ENCODE measurements at regions of chr18 and their contacts with region 1.

Region 1: DNA sequence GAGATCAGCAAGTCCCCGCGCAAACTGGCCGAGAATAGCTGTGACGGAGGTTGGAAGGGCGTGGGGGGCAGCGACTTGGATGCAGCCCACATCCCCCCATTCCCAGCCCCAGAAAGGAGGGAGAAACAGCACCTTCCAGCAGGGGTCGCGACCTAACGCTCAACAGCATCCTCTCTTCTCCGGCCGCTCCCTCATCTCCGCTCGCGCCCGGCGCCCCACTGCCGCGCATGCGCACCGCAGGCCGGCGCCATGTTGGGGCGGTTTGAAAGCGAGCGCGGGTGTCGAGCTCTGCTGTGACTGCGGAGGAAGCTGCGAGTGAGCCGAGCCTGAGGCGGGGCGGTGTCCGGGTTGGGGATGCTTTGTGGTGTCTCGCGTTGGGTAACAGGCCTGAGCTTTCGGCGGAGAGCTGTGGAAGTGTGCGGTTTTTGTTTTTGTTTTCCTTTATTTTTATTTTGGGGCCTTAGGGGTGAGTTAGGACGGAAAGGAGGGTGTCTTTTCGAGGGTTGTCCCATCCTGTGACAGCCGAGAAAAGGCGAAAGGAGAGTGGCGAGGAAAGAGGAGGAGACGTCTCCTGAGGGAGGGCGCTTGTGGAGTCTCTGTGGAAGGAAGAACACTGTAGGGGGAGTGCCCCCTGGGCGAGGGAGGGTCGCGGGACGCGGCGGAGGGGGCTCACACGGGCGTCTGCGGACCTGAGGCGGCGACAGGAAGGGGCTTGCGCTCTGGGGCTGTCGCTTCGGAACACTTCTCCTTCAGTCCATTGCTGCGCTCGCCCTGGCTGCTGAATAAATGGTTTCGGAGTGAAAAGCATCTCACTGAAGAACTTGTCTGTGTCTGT is at the starts of genes C18orf54 and STARD6:
- DNase-seq: peak; percentile 82 to 93 (median 91)
- ATAC-seq: peak; percentile 96
- H3K4me3 ChIP-seq: peak within 1 kb of the TSS; percentile 88
- H3K4me3 Mint-ChIP-seq: peak within 1 kb of the TSS; percentile 93 to 99 (median 97)
- H3K27ac ChIP-seq: peak within 1 kb of the TSS; percentile 60
- H3K27ac Mint-ChIP-seq: peak within 1 kb of the TSS; percentile 74 to 99 (median 91)
- H3K4me1 ChIP-seq: peaks cover 4 to 7% of the 10 kb centered on the region in 2 donors
- H3K4me1 Mint-ChIP-seq: peaks cover 6 to 32% (median 21%) of the 10 kb centered on the region in 7 donors
- H3K27me3 ChIP-seq: no peaks in the 10 kb centered on the region
- H3K27me3 Mint-ChIP-seq: peaks cover 0 to 12% (median 5%) of the 10 kb centered on the region in 5 donors
- total RNA-seq, gene C18orf54: 0.77 to 8.3 (median 3.6) TPM
- total RNA-seq, gene STARD6: not detected

Region 2: GRCh38 chr18:54181856-54182602 is 175.8 kb before region 1 on chr18:
- CTCF ChIA-PET with region 1: no interaction called
- POLR2A ChIA-PET with region 1: no interaction called
- intact Hi-C with region 1: no loop called
- DNase-seq: no peak
- ATAC-seq: no peak
- H3K4me3 ChIP-seq: no peak overlapping the region
- H3K4me3 Mint-ChIP-seq: no peak overlapping the region
- H3K27ac ChIP-seq: no peak overlapping the region
- H3K27ac Mint-ChIP-seq: no peak overlapping the region
- H3K4me1 ChIP-seq: no peaks in the 10 kb centered on the region
- H3K4me1 Mint-ChIP-seq: peaks cover under 1 to 9% (median 4%) of the 10 kb centered on the region in 7 donors
- H3K27me3 ChIP-seq: no peaks in the 10 kb centered on the region
- H3K27me3 Mint-ChIP-seq: no peaks in the 10 kb centered on the region

Region 3: DNA sequence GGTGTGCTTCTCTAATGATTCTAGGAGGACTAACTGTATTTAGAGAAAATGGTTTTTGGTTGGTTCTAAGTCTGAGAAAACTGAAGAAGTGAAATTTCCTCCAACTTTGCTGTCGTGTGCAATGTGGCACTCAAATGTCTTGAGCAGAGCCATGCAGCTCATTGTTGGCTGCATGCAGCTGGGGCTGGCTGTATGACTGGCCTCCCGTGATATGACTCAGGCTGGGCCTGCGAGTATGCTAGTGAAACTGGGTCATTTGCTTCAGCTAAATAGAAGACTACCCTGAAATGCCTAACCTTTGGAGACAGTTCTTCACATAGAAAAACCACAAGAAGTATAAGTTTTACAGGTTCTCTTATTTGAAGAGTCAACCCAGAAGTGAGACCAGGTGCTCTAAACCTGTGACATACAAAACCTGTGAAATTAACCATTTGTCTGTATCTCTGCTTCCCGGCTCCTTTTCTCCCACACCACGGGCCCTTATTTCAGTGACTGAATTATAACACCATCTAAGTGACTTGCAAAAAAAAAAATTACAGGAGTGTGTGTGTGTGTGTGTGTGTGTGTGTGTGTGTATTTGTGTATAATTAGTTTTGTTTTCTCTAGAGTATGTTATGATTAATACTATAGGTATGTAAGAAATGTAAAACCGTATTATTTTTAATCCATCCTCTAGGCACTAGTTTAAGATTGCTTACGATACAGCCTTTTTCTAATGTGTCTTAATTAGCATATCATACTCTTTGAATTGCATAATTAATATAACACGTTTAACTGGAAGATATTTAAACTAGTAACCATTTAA is 72.7 kb before region 1 on chr18:
- CTCF ChIA-PET with region 1: no interaction called
- POLR2A ChIA-PET with region 1: no interaction called
- intact Hi-C with region 1: loop called in 1 of 2 experiments (anchors 5 kb)
- DNase-seq: peak in 1 of 9 donors; percentile 60
- ATAC-seq: peak; percentile 51
- H3K4me3 ChIP-seq: no peak overlapping the region
- H3K4me3 Mint-ChIP-seq: peak overlapping the region in 1 of 10 donors; percentile 15
- H3K27ac ChIP-seq: no peak overlapping the region
- H3K27ac Mint-ChIP-seq: peak overlapping the region in 3 of 9 donors; percentile 28 to 29 (median 28)
- H3K4me1 ChIP-seq: peaks cover 0 to 5% of the 10 kb centered on the region in 2 donors
- H3K4me1 Mint-ChIP-seq: peaks cover 1 to 31% (median 7%) of the 10 kb centered on the region in 7 donors
- H3K27me3 ChIP-seq: no peaks in the 10 kb centered on the region
- H3K27me3 Mint-ChIP-seq: no peaks in the 10 kb centered on the region

Region 4: DNA sequence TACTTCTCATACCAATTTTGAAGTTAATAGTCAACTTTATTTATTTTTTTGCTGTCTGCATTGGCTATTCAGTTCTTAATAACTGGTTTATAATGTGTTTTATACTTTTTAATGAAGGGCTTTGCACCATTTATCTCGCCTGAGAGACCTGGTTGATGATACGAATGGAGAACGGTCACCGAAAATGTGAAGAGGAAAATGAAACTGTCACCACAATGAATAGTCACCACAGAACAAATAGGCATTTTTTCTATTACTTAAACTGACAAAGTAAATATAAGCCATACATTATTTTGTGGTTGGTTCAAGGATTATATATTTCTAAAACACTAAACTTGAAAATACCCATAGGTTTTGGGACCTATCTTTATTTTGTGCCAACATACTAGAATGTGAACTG is 20.2 kb after region 1 on chr18:
- CTCF ChIA-PET with region 1: interaction called, 3 read pairs
- POLR2A ChIA-PET with region 1: no interaction called
- intact Hi-C with region 1: loop called in 1 of 2 experiments (anchors 2 kb)
- DNase-seq: no peak
- ATAC-seq: no peak
- H3K4me3 ChIP-seq: no peak overlapping the region
- H3K4me3 Mint-ChIP-seq: no peak overlapping the region
- H3K27ac ChIP-seq: no peak overlapping the region
- H3K27ac Mint-ChIP-seq: no peak overlapping the region
- H3K4me1 ChIP-seq: no peaks in the 10 kb centered on the region
- H3K4me1 Mint-ChIP-seq: no peaks in the 10 kb centered on the region
- H3K27me3 ChIP-seq: no peaks in the 10 kb centered on the region
- H3K27me3 Mint-ChIP-seq: no peaks in the 10 kb centered on the region

Region 5: GRCh38 chr18:54392543-54393023 is 34.7 kb after region 1 on chr18:
- CTCF ChIA-PET with region 1: no interaction called
- POLR2A ChIA-PET with region 1: no interaction called
- intact Hi-C with region 1: loop called (anchors 1 to 2 kb)
- DNase-seq: peak in 7 of 9 donors; percentile 5 to 55 (median 39)
- ATAC-seq: peak; percentile 80
- H3K4me3 ChIP-seq: no peak overlapping the region
- H3K4me3 Mint-ChIP-seq: no peak overlapping the region
- H3K27ac ChIP-seq: no peak overlapping the region
- H3K27ac Mint-ChIP-seq: no peak overlapping the region
- H3K4me1 ChIP-seq: no peaks in the 10 kb centered on the region
- H3K4me1 Mint-ChIP-seq: peaks cover 0 to 37% (median 0%) of the 10 kb centered on the region in 7 donors
- H3K27me3 ChIP-seq: no peaks in the 10 kb centered on the region
- H3K27me3 Mint-ChIP-seq: peaks cover 9 to 29% (median 16%) of the 10 kb centered on the region in 5 donors

Region 6: DNA sequence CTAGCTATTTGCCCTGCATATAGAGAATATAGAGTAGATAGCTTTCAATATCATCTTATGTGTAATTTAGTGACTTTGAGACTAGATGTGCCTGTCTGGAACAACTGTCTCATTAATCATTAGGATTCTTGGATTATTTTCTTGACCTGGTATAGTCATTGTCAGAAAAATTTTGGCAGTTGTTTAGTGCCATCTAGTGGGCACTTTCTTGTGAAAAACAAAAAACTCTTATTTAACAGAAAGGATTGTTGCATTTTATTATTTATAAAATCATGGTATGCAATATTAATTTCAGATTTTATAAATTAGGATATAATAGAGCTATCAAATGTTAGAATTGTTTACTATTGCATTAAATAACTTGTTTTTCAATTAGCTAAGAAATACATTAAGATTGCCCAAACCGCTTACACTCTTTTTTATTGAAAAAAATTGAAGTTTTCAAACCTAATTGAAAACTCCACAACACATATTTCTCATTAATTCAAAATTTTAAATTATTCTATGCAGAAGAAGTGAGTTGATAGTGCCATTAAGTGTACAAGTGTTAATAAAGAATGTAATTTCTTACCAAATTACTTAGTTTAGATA is 313.5 kb after region 1 on chr18:
- CTCF ChIA-PET with region 1: no interaction called
- POLR2A ChIA-PET with region 1: no interaction called
- intact Hi-C with region 1: loop called in 1 of 2 experiments (anchors 1 kb)
- DNase-seq: peak in 4 of 9 donors; percentile 16 to 30 (median 20)
- ATAC-seq: no peak
- H3K4me3 ChIP-seq: no peak overlapping the region
- H3K4me3 Mint-ChIP-seq: no peak overlapping the region
- H3K27ac ChIP-seq: no peak overlapping the region
- H3K27ac Mint-ChIP-seq: no peak overlapping the region
- H3K4me1 ChIP-seq: no peaks in the 10 kb centered on the region
- H3K4me1 Mint-ChIP-seq: no peaks in the 10 kb centered on the region
- H3K27me3 ChIP-seq: no peaks in the 10 kb centered on the region
- H3K27me3 Mint-ChIP-seq: peaks cover 0 to 10% (median 9%) of the 10 kb centered on the region in 5 donors

Region 7: GRCh38 chr18:54828281-54828881 is 470.5 kb after region 1 on chr18 and contains the start of gene RAB27B:
- CTCF ChIA-PET with region 1: no interaction called
- POLR2A ChIA-PET with region 1: no interaction called
- intact Hi-C with region 1: loop called in 1 of 2 experiments (anchors 5 kb)
- DNase-seq: peak; percentile 41 to 68 (median 61)
- ATAC-seq: peak; percentile 96
- H3K4me3 ChIP-seq: peak within 1 kb of the TSS; percentile 72
- H3K4me3 Mint-ChIP-seq: peak within 1 kb of the TSS; percentile 87 to 95 (median 92)
- H3K27ac ChIP-seq: peak within 1 kb of the TSS; percentile 63
- H3K27ac Mint-ChIP-seq: peak within 1 kb of the TSS in 8 of 9 donors; percentile 60 to 87 (median 76)
- H3K4me1 ChIP-seq: no peaks in the 10 kb centered on the region
- H3K4me1 Mint-ChIP-seq: peaks cover 17 to 45% (median 24%) of the 10 kb centered on the region in 7 donors
- H3K27me3 ChIP-seq: no peaks in the 10 kb centered on the region
- H3K27me3 Mint-ChIP-seq: peaks cover 0 to 34% (median 0%) of the 10 kb centered on the region in 5 donors
- total RNA-seq, gene RAB27B: 1.3 to 6.4 (median 1.6) TPM

Region 8: GRCh38 chr18:55589625-55590291 is 1231.9 kb after region 1 on chr18:
- CTCF ChIA-PET with region 1: no interaction called
- POLR2A ChIA-PET with region 1: no interaction called
- intact Hi-C with region 1: loop called (anchors 2 to 10 kb)
- DNase-seq: peak; percentile 61 to 89 (median 77)
- ATAC-seq: peak; percentile 97
- H3K4me3 ChIP-seq: peak overlapping the region; percentile 25
- H3K4me3 Mint-ChIP-seq: peak overlapping the region; percentile 82 to 94 (median 89)
- H3K27ac ChIP-seq: peak overlapping the region; percentile 53
- H3K27ac Mint-ChIP-seq: peak overlapping the region; percentile 25 to 86 (median 75)
- H3K4me1 ChIP-seq: no peaks in the 10 kb centered on the region
- H3K4me1 Mint-ChIP-seq: peaks cover 12 to 42% (median 36%) of the 10 kb centered on the region in 7 donors
- H3K27me3 ChIP-seq: peaks cover 0 to 8% of the 10 kb centered on the region in 2 donors
- H3K27me3 Mint-ChIP-seq: peaks cover 38 to 70% (median 48%) of the 10 kb centered on the region in 5 donors